ENCODE measurements at regions of chr14 and their contacts with region 1.

Region 1: GRCh38 chr14:103576371-103577024 is 13.7 kb downstream of the COA8 start:
- DNase-seq: no peak
- ATAC-seq: no peak
- H3K4me3 Mint-ChIP-seq: no peak overlapping the region
- H3K27ac Mint-ChIP-seq: no peak overlapping the region
- H3K4me1 Mint-ChIP-seq: no peaks in the 10 kb centered on the region
- H3K27me3 Mint-ChIP-seq: no peaks in the 10 kb centered on the region
- CTCF ChIP-seq: no peak

Region 2: DNA sequence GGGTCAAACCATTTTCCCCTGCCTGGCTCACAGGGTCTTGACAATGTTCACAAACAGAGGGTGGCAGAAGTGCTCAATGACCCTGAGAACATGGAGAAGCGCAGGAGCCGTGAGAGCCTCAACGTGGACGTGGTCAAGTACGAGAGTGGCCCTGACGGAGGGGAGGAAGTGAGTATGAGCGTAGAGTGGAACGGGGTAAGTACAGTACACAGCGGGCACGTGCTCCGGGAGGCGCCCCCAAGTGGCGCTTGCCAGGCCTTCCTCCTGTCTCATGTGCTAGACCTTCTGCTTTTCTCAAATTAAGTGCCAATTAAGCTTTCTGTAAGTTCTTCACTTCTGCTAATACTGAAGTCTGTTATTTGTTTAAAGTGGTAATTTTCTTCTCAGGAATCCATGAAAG is 102.9 kb after region 1 on chr14:
- CTCF ChIA-PET with region 1: interaction called, 12 read pairs
- POLR2A ChIA-PET with region 1: no interaction called
- intact Hi-C with region 1: loop called (anchors 1 kb)
- DNase-seq: peak; percentile 54
- ATAC-seq: peak; percentile 99
- H3K4me3 Mint-ChIP-seq: no peak overlapping the region
- H3K27ac Mint-ChIP-seq: peak overlapping the region; percentile 60
- H3K4me1 Mint-ChIP-seq: peaks cover 16% of the 10 kb centered on the region
- H3K27me3 Mint-ChIP-seq: no peaks in the 10 kb centered on the region
- CTCF ChIP-seq: no peak

Region 3: DNA sequence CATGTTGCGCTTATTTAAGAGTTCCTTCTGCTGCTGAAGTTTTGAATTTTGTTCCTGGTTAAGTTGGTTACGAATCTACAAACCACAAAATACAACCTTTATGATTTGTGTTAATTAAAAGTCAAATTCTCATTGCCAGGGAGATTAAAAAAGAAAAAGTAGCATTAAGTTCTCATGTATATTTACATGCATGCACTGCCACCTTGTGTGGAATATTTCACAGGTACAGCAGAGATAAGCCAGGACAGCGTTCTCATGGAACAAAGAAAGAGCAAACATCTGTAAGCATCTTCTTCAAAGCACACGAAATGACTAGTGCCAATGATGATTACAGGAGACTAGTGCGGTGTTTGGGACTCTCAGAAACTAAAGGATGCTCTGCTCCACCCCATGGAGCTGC is 173.4 kb after region 1 on chr14:
- CTCF ChIA-PET with region 1: no interaction called
- POLR2A ChIA-PET with region 1: no interaction called
- intact Hi-C with region 1: loop called (anchors 1 kb)
- DNase-seq: no peak
- ATAC-seq: no peak
- H3K4me3 Mint-ChIP-seq: no peak overlapping the region
- H3K27ac Mint-ChIP-seq: no peak overlapping the region
- H3K4me1 Mint-ChIP-seq: no peaks in the 10 kb centered on the region
- H3K27me3 Mint-ChIP-seq: no peaks in the 10 kb centered on the region
- CTCF ChIP-seq: no peak

Region 4: GRCh38 chr14:103910262-103910935 is 333.9 kb after region 1 on chr14:
- CTCF ChIA-PET with region 1: no interaction called
- POLR2A ChIA-PET with region 1: no interaction called
- intact Hi-C with region 1: loop called (anchors 1 kb)
- DNase-seq: peak; percentile 30
- ATAC-seq: peak; percentile 79
- H3K4me3 Mint-ChIP-seq: peak overlapping the region; percentile 33
- H3K27ac Mint-ChIP-seq: no peak overlapping the region
- H3K4me1 Mint-ChIP-seq: peaks cover 7% of the 10 kb centered on the region
- H3K27me3 Mint-ChIP-seq: no peaks in the 10 kb centered on the region
- CTCF ChIP-seq: no peak

Measured in activated B cell treated with CpG ODN at 0.5 μM for 24 hours (primary cell).